ENCODE measurements at regions of chr5 and their contacts with region 1.

Region 1: GRCh38 chr5:80904533-80905187 is 55.5 kb upstream of the RASGRF2 start:
- DNase-seq: no peak
- H3K4me3 ChIP-seq: no peak overlapping the region
- H3K27ac ChIP-seq: no peak overlapping the region
- H3K4me1 ChIP-seq: no peaks in the 10 kb centered on the region
- H3K27me3 ChIP-seq: no peaks in the 10 kb centered on the region
- CTCF ChIP-seq: no peak
- EP300 ChIP-seq: no peak
- POLR2A ChIP-seq: no peak

Region 2: DNA sequence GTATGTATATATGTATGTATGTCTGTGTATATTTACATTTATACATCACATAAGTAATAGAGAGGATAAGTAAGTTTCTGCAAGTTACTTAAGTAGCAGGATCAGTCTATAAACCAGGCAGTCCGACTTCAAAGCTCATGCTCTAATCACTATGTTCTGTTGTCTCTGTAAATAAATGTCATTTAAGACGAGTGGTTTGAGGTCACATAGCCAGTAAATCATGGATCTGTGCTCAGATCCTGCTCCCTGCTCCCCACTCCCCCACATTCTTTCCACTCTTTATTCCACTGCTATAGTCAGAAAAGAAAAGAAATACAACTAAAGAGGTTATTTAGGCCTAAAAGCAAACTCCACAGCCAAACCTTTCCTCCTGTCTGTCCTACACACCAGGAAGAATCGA is 739.2 kb before region 1 on chr5:
- intact Hi-C with region 1: no loop called
- DNase-seq: no peak
- H3K4me3 ChIP-seq: no peak overlapping the region
- H3K27ac ChIP-seq: no peak overlapping the region
- H3K4me1 ChIP-seq: peaks cover 0 to 9% (median 3%) of the 10 kb centered on the region in 4 donors
- H3K27me3 ChIP-seq: no peaks in the 10 kb centered on the region
- CTCF ChIP-seq: no peak
- EP300 ChIP-seq: no peak
- POLR2A ChIP-seq: no peak

Region 3: DNA sequence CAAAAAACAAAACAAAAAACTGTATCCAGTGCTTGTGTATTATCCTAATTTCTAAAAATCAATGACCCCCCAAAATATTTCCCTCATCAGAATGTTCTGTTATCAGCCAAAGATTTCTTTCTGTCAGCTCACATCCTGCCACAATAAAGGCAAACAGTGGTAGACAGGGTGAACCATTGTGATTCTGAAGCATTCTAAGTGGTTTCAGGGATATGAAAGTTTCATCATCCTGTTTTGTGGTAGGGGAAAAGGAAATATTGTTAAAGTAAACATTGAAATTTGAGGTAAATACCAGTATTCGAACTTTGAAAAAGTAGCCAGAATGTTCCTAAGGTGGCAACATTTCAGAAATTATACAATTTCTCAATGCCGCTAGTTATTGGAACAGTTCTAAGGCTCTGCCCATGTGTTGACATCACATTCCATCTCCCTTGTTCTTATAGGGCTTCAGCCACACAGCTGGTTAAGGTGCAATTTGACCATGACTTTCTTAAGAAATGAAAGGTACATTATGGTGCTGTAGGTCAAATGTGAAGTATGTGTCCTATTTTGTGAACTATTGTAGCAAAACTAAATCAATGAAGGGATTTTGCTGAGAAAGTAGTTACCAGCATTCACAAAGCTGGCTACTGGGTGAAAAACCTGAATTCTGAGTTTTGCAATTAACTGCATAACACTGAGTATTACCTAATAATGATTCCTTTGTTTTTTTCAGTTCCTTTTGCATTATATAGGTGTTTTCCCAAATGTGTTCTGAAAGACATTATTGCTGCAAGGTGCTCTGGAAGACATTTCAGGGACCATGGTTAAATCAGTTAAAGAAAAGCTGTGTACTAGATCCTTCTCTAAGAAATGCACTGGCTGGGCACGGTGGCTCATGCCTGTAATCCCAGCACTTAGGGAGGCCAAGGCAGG is 52.1 kb before region 1 on chr5:
- intact Hi-C with region 1: no loop called
- DNase-seq: no peak
- H3K4me3 ChIP-seq: no peak overlapping the region
- H3K27ac ChIP-seq: no peak overlapping the region
- H3K4me1 ChIP-seq: no peaks in the 10 kb centered on the region
- H3K27me3 ChIP-seq: no peaks in the 10 kb centered on the region
- CTCF ChIP-seq: no peak
- EP300 ChIP-seq: no peak
- POLR2A ChIP-seq: no peak

Region 4: DNA sequence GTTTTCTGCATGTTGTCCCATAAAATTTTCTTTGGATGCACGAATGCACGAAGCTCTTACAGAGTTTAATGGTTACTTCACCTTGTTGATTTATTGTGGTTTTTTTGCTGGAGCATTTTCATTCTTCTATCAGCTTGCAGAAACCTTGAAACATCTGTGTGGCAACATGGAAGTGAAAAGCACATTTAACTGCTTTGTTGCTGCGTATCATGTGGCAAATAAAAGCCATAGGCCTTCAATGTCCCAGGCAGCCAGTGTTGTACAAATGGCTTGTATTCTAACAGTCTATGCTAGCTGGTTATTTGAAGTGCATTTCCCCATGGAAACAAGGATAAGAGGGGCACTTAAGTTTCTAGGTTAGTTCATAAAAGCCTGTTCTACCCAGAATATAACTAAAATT is 13.0 kb after region 1 on chr5:
- intact Hi-C with region 1: loop called (anchors 2 kb)
- DNase-seq: no peak
- H3K4me3 ChIP-seq: no peak overlapping the region
- H3K27ac ChIP-seq: no peak overlapping the region
- H3K4me1 ChIP-seq: no peaks in the 10 kb centered on the region
- H3K27me3 ChIP-seq: no peaks in the 10 kb centered on the region
- CTCF ChIP-seq: no peak
- EP300 ChIP-seq: no peak
- POLR2A ChIP-seq: no peak

Region 5: GRCh38 chr5:81081461-81081835 is 176.8 kb after region 1 on chr5:
- intact Hi-C with region 1: no loop called
- DNase-seq: no peak
- H3K4me3 ChIP-seq: no peak overlapping the region
- H3K27ac ChIP-seq: no peak overlapping the region
- H3K4me1 ChIP-seq: no peaks in the 10 kb centered on the region
- H3K27me3 ChIP-seq: no peaks in the 10 kb centered on the region
- CTCF ChIP-seq: no peak
- EP300 ChIP-seq: no peak
- POLR2A ChIP-seq: no peak